Heart right ventricle (tissue), 16 donors: ENCODE measurements at regions of chr3 and their contacts with region 1.

Region 1: DNA sequence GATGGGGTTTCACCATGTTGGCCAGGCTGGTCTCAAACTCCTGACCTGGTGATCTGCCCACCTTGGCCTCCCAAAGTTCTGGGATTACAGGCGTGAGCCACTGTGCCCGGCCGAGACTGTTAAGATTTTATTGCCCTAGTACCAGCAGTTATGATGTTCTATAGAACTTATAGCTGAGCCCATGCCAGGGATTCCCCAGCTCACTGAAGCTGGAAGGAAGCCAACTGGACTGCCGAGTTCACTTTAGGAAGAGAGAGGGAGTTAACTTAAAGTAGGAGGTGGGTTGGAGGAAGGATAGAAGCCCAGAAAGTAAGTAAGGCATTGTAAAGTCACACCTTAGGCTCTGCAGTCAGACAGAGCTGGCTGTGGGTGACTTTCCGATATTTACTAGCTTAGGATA is 101.1 kb upstream of the BOC start:
- DNase-seq: no peak
- ATAC-seq: no peak
- H3K4me3 ChIP-seq: no peak overlapping the region
- H3K27ac ChIP-seq: no peak overlapping the region
- H3K4me1 ChIP-seq: no peaks in the 10 kb centered on the region
- H3K27me3 ChIP-seq: no peaks in the 10 kb centered on the region
- CTCF ChIP-seq: no peak

Region 2: GRCh38 chr3:113079218-113079961 is 30.9 kb before region 1 on chr3:
- intact Hi-C with region 1: loop called in 1 of 10 experiments (anchors 1 kb)
- DNase-seq: no peak
- ATAC-seq: no peak
- H3K4me3 ChIP-seq: peak overlapping the region in 2 of 10 donors; percentile 9 to 25
- H3K27ac ChIP-seq: peak overlapping the region in 1 of 10 donors; percentile 7
- H3K4me1 ChIP-seq: peaks cover 0 to 5% (median 0%) of the 10 kb centered on the region in 9 donors
- H3K27me3 ChIP-seq: no peaks in the 10 kb centered on the region
- CTCF ChIP-seq: no peak

Region 3: GRCh38 chr3:114879059-114880031 is 1769.1 kb after region 1 on chr3:
- intact Hi-C with region 1: no loop called
- DNase-seq: peak in 1 of 2 donors; percentile 13
- ATAC-seq: peak in 7 of 8 donors; percentile 39 to 81 (median 68)
- H3K4me3 ChIP-seq: no peak overlapping the region
- H3K27ac ChIP-seq: peak overlapping the region in 4 of 10 donors; percentile 1 to 58 (median 24)
- H3K4me1 ChIP-seq: peaks cover 0 to 41% (median 25%) of the 10 kb centered on the region in 9 donors
- H3K27me3 ChIP-seq: no peaks in the 10 kb centered on the region
- CTCF ChIP-seq: no peak